ENCODE measurements at regions of chr4 and their contacts with region 1.

Region 1: GRCh38 chr4:47891928-47892327 is 22.5 kb downstream of the NFXL1 start:
- DNase-seq: no peak
- CTCF ChIP-seq: no peak

Region 2: DNA sequence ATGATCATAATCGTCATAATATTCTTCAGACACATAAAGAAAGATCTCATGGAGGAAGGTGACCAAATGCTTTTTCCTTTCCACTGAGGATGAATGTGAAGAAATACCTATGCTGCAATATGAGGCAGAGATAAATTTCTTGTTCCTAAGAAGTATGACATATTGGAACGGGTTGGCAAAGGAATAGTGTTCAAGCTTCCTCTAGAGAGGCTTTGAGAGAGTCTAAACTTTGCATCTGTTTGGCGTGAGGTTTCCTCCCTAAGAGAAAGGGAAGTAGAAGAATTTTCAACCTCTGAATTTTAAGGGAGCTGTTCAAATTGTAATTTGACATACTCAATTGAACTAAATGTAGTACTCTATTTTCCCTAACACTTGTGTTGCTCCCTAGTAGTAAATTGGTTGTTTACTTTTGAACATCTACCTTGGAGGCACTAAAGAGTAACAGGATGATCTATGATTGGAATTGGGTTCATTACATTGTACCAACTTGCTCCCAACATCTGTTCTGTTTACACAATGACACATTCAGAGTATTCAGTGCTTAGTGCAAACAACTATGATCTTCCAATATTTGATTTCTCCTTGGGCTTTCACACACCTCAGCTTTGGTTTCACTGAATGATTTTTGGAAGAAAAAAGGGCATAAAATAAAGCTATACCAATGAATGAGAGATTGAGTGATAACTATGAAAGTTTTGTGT is 176.1 kb before region 1 on chr4:
- CTCF ChIA-PET with region 1: no interaction called
- POLR2A ChIA-PET with region 1: no interaction called
- DNase-seq: no peak
- CTCF ChIP-seq: no peak

Region 3: GRCh38 chr4:47907089-47907646 is 15.2 kb after region 1 on chr4:
- CTCF ChIA-PET with region 1: interaction called, 12 read pairs
- POLR2A ChIA-PET with region 1: no interaction called
- DNase-seq: no peak
- CTCF ChIP-seq: no peak

Measured in GM10248 (cell line).